GM10248 (cell line): ENCODE measurements at regions of chr1 and their contacts with region 1.

Region 1: GRCh38 chr1:162578071-162578700 is 16.7 kb downstream of the UAP1 start:
- DNase-seq: no peak
- CTCF ChIP-seq: no peak

Region 2: GRCh38 chr1:162564762-162565218 is 13.4 kb before region 1 on chr1:
- CTCF ChIA-PET with region 1: interaction called, 23 read pairs
- POLR2A ChIA-PET with region 1: no interaction called
- DNase-seq: no peak
- CTCF ChIP-seq: no peak

Region 3: GRCh38 chr1:162732566-162733335 is 154.6 kb after region 1 on chr1:
- CTCF ChIA-PET with region 1: no interaction called
- POLR2A ChIA-PET with region 1: no interaction called
- DNase-seq: no peak
- CTCF ChIP-seq: no peak